ENCODE measurements at regions of chr1 and their contacts with region 1.

Region 1: GRCh38 chr1:201530741-201531531 is 8.0 kb upstream of the NAV1 start:
- ATAC-seq: peak; percentile 67 to 98 (median 82)
- H3K4me3 ChIP-seq: no peak overlapping the region
- H3K27ac ChIP-seq: no peak overlapping the region
- H3K4me1 ChIP-seq: peaks cover 8 to 13% of the 10 kb centered on the region in 2 donors

Region 2: DNA sequence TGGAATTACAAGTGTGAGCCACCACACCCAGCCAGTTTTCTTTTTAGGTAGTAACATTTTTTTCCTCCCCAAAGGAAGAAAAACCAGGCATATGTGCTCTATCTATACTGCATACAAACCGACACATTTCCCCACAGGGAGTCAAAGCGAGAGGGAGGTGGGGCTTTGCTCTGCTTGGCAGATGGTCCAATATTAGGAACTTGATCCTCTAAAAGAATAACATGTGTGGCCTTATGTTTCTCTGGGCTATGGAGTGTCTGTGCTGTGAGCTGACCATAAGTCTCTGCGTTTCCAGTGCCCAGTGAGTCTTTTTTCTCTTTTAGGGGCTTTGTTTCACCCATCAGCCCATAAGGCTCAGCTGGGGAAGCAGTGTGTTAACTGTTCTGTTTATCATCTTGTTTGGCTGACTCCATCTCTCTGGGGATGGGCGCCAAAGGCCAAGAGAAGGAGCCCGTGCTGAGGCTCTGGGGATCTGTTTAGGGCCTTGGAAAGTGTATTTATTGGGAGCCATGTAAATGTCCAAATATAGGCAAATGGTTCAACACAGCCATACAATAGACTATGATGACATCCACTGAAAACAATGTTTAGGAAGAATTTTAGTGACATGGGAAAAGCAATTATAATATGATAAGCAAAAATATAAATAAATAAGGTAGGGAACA is 395.2 kb after region 1 on chr1:
- in situ Hi-C with region 1: no loop called
- ATAC-seq: peak in 2 of 8 experiments; percentile 45 to 60
- H3K4me3 ChIP-seq: no peak overlapping the region
- H3K27ac ChIP-seq: peak overlapping the region in 1 of 2 donors; percentile 2
- H3K4me1 ChIP-seq: peaks cover 0 to 3% of the 10 kb centered on the region in 2 donors

Region 3: DNA sequence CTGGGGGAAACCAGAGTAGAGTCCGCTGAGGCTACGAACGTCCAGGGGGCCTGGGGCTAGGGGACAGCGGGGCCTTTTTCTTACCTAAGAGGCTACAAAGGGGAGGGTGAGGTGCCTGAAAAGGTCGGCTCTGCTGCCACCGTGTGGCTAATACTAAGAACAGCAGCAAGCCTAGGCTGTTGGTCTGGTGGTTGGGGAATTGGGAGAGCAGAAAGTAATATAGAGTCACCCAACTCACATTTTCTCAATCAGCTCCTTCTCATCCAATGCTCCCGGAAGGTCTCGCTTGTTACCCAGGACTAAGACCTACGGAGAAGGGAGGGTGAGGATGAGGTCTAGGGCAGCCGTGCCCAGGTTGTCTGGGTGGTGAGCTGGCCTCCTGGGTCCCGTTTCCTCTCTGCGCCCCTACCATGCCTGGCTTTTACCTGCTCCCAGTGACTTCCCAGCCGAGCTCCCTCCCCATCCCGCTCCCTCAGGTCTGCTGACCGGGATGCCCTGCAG is 604.3 kb after region 1 on chr1:
- in situ Hi-C with region 1: loop called in 1 of 9 experiments (anchors 25 kb)
- ATAC-seq: peak; percentile 31 to 93 (median 67)
- H3K4me3 ChIP-seq: no peak overlapping the region
- H3K27ac ChIP-seq: no peak overlapping the region
- H3K4me1 ChIP-seq: peaks cover 11 to 29% of the 10 kb centered on the region in 2 donors

Measured in motor neuron (in vitro differentiated cells).